ENCODE measurements at regions of chr4 and their contacts with region 1.

Region 1: GRCh38 chr4:114077610-114078009 is 98.2 kb upstream of the ARSJ start:
- DNase-seq: no peak
- H3K4me3 ChIP-seq: no peak overlapping the region
- H3K27ac ChIP-seq: no peak overlapping the region
- H3K4me1 ChIP-seq: no peaks in the 10 kb centered on the region
- H3K27me3 ChIP-seq: no peaks in the 10 kb centered on the region
- CTCF ChIP-seq: no peak
- EP300 ChIP-seq: no peak
- POLR2A ChIP-seq: no peak

Region 2: GRCh38 chr4:113952452-113953029 is 125.1 kb before region 1 on chr4:
- intact Hi-C with region 1: loop called (anchors 10 kb)
- DNase-seq: no peak
- H3K4me3 ChIP-seq: no peak overlapping the region
- H3K27ac ChIP-seq: no peak overlapping the region
- H3K4me1 ChIP-seq: peaks cover 0 to 46% (median 26%) of the 10 kb centered on the region in 4 donors
- H3K27me3 ChIP-seq: no peaks in the 10 kb centered on the region
- CTCF ChIP-seq: peak; percentile 12 to 81 (median 62)
- EP300 ChIP-seq: no peak
- POLR2A ChIP-seq: no peak

Region 3: GRCh38 chr4:114156371-114156770 is 78.8 kb after region 1 on chr4:
- intact Hi-C with region 1: no loop called
- DNase-seq: no peak
- H3K4me3 ChIP-seq: no peak overlapping the region
- H3K27ac ChIP-seq: no peak overlapping the region
- H3K4me1 ChIP-seq: no peaks in the 10 kb centered on the region
- H3K27me3 ChIP-seq: no peaks in the 10 kb centered on the region
- CTCF ChIP-seq: no peak
- EP300 ChIP-seq: no peak
- POLR2A ChIP-seq: no peak